B cell (primary cell): ENCODE measurements at regions of chr12 and their contacts with region 1.

Region 1: GRCh38 chr12:57782608-57783465 is at the start of gene TSFM:
- DNase-seq: peak; percentile 96
- ATAC-seq: peak; percentile 99
- H3K4me3 ChIP-seq: peak within 1 kb of the TSS; percentile 83 to 100 (median 98)
- H3K4me3 Mint-ChIP-seq: peak within 1 kb of the TSS; percentile 100
- H3K27ac ChIP-seq: peak within 1 kb of the TSS; percentile 45 to 77
- H3K27ac Mint-ChIP-seq: peak within 1 kb of the TSS; percentile 96
- H3K4me1 ChIP-seq: peaks cover 9 to 17% of the 10 kb centered on the region in 2 donors
- H3K4me1 Mint-ChIP-seq: peaks cover 18% of the 10 kb centered on the region
- H3K27me3 ChIP-seq: no peaks in the 10 kb centered on the region
- H3K27me3 Mint-ChIP-seq: no peaks in the 10 kb centered on the region
- CTCF ChIP-seq: peak; percentile 94
- total RNA-seq, gene TSFM: 20.6 and 20.9 TPM in 2 replicates

Region 2: GRCh38 chr12:57744777-57745484 is 37.9 kb before region 1 on chr12 and contains the start of gene TSPAN31:
- CTCF ChIA-PET with region 1: interaction called, 7 read pairs
- POLR2A ChIA-PET with region 1: no interaction called
- intact Hi-C with region 1: loop called (anchors 5 kb)
- DNase-seq: peak; percentile 97
- ATAC-seq: peak; percentile 86
- H3K4me3 ChIP-seq: peak within 1 kb of the TSS; percentile 68 to 90 (median 86)
- H3K4me3 Mint-ChIP-seq: peak within 1 kb of the TSS; percentile 92
- H3K27ac ChIP-seq: peak within 1 kb of the TSS; percentile 80 to 94
- H3K27ac Mint-ChIP-seq: peak within 1 kb of the TSS; percentile 91
- H3K4me1 ChIP-seq: peaks cover 33 to 52% of the 10 kb centered on the region in 2 donors
- H3K4me1 Mint-ChIP-seq: peaks cover 44% of the 10 kb centered on the region
- H3K27me3 ChIP-seq: no peaks in the 10 kb centered on the region
- H3K27me3 Mint-ChIP-seq: no peaks in the 10 kb centered on the region
- CTCF ChIP-seq: no peak
- total RNA-seq, gene TSPAN31: 29.6 and 33.5 TPM in 2 replicates

Region 3: DNA sequence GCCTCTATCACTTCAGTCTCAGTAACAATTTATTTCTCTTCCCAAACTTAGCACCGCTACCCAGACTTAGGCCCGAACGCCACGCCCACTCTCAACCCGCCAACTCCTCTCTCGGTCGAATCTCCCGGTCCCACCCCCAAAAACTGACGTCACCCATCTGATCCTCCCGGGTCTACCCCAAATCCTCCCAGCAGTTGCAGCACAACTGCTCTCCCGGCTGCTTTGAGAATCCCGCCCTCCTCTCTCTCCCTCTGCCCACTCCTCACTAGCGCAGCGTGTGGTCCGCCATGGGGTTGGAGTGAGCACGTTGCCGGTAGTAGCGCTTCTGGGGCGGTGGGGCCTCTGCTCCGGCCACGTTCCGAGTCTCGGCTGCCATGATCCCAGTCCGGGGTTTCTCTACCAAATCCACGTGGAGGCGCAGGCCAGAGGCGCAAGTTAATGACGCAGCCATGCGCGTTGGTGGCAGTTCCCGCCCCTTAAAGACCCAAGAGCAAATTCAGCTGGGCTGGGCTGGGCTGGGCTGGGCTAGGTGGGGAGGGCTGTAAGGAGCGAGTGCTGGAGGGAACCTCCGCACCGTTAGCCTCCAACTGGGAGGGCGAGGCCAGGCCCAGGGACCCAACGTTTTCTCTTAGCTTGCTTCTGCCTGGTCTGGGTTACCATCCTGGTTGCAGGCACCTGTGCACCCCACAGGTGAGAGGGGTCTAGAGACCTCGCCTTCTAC is 11.0 kb before region 1 on chr12 and contains the start of gene METTL1:
- CTCF ChIA-PET with region 1: interaction called, 7 read pairs
- POLR2A ChIA-PET with region 1: no interaction called
- intact Hi-C with region 1: loop called (anchors 1 kb)
- DNase-seq: peak; percentile 94
- ATAC-seq: peak; percentile 91
- H3K4me3 ChIP-seq: peak within 1 kb of the TSS; percentile 70 to 96 (median 91)
- H3K4me3 Mint-ChIP-seq: peak within 1 kb of the TSS; percentile 96
- H3K27ac ChIP-seq: peak within 1 kb of the TSS; percentile 59 to 81
- H3K27ac Mint-ChIP-seq: peak within 1 kb of the TSS; percentile 91
- H3K4me1 ChIP-seq: peaks cover 15 to 24% of the 10 kb centered on the region in 2 donors
- H3K4me1 Mint-ChIP-seq: peaks cover 16% of the 10 kb centered on the region
- H3K27me3 ChIP-seq: peaks cover 0 to 9% (median 7%) of the 10 kb centered on the region in 4 experiments
- H3K27me3 Mint-ChIP-seq: no peaks in the 10 kb centered on the region
- CTCF ChIP-seq: no peak
- total RNA-seq, gene METTL1: 8.5 and 9.2 TPM in 2 replicates